ENCODE measurements at regions of chr11 and their contacts with region 1.

Region 1: GRCh38 chr11:47616726-47617416 is 22.7 kb upstream of the C1QTNF4 start:
- DNase-seq: peak; percentile 53
- H3K4me3 ChIP-seq: no peak overlapping the region
- H3K27ac ChIP-seq: no peak overlapping the region
- H3K4me1 ChIP-seq: peaks cover 4% of the 10 kb centered on the region
- CTCF ChIP-seq: peak; percentile 88

Region 2: GRCh38 chr11:47485110-47485509 is 131.8 kb before region 1 on chr11:
- CTCF ChIA-PET with region 1: no interaction called
- POLR2A ChIA-PET with region 1: no interaction called
- intact Hi-C with region 1: loop called (anchors 5 kb)
- DNase-seq: no peak
- H3K4me3 ChIP-seq: no peak overlapping the region
- H3K27ac ChIP-seq: no peak overlapping the region
- H3K4me1 ChIP-seq: no peaks in the 10 kb centered on the region
- CTCF ChIP-seq: no peak